Ascending aorta (tissue), 2 donors: ENCODE measurements at regions of chr1 and their contacts with region 1.

Region 1: GRCh38 chr1:40438391-40439015 is 11.8 kb upstream of the ZFP69B start:
- DNase-seq: no peak
- H3K4me3 ChIP-seq: no peak overlapping the region
- H3K27ac ChIP-seq: no peak overlapping the region
- H3K4me1 ChIP-seq: no peaks in the 10 kb centered on the region
- H3K27me3 ChIP-seq: no peaks in the 10 kb centered on the region
- CTCF ChIP-seq: peak; percentile 15 to 51 (median 23)

Region 2: DNA sequence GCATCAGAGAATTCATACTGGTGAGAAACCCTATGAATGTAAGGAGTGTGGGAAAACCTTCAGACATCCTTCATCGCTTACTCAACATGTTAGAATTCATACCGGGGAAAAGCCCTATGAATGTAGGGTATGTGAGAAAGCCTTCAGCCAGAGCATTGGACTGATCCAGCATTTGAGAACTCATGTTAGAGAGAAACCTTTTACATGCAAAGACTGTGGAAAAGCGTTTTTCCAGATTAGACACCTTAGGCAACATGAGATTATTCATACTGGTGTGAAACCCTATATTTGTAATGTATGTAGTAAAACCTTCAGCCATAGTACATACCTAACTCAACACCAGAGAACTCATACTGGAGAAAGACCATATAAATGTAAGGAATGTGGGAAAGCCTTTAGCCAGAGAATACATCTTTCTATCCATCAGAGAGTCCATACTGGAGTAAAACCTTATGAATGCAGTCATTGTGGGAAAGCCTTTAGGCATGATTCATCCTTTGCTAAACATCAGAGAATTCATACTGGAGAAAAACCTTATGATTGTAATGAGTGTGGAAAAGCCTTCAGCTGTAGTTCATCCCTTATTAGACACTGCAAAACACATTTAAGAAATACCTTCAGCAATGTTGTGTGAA is 24.6 kb after region 1 on chr1:
- intact Hi-C with region 1: loop called (anchors 2 kb)
- DNase-seq: no peak
- H3K4me3 ChIP-seq: no peak overlapping the region
- H3K27ac ChIP-seq: no peak overlapping the region
- H3K4me1 ChIP-seq: no peaks in the 10 kb centered on the region
- H3K27me3 ChIP-seq: no peaks in the 10 kb centered on the region
- CTCF ChIP-seq: no peak

Region 3: DNA sequence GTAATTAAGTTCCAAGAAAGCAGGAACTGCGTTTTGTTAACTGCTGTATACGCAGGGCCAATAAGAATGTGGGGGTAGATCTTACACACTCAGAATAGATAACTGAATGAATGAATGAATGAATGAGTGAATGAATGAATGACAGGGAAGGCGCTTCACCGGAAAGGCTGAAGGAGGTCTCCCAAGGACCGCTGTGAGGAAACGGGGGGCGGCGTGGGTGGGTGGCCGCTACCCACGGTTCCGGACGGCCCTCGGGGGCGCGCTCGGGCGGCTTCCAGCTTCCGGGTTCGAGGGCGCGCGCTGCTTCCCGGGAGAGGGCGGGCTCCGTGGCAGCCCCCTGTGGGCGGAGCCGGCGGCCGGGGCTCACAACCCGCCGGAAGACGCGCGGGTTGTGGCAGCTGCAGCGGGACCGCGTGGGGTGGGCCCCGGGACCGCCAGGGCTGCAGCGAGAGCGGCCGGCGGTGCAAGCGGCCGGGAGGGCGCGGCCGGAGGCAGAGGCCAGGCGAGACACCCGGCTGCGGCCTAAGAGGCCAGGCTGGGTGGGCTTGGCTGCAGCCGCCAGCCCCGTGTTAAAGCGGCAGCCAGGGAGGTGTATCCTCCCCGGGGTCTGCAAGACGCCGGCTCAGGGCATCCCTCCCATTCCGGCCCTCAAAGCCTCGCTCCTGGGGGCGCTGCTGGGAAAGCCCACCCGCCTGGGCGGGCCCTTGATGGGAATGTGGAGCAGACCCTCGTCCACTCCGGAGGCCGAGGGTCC is 38.6 kb after region 1 on chr1 and contains the start of gene ZFP69:
- intact Hi-C with region 1: no loop called
- DNase-seq: peak; percentile 9 to 84
- H3K4me3 ChIP-seq: peak within 1 kb of the TSS; percentile 93 to 99
- H3K27ac ChIP-seq: peak within 1 kb of the TSS; percentile 68 to 77
- H3K4me1 ChIP-seq: peaks cover 0 to 4% of the 10 kb centered on the region in 2 donors
- H3K27me3 ChIP-seq: no peaks in the 10 kb centered on the region
- CTCF ChIP-seq: no peak
- total RNA-seq, gene ZFP69: 2.8 TPM